ENCODE measurements at regions of chr1 and their contacts with region 1.

Region 1: GRCh38 chr1:205919026-205919746 is 24.1 kb downstream of the SLC26A9 start:
- DNase-seq: peak in 3 of 4 donors; percentile 55 to 82 (median 74)
- ATAC-seq: peak; percentile 81
- H3K4me3 ChIP-seq: no peak overlapping the region
- H3K27ac ChIP-seq: peak overlapping the region in 1 of 2 donors; percentile 59
- H3K4me1 ChIP-seq: peaks cover 11 to 12% of the 10 kb centered on the region in 2 donors
- H3K27me3 ChIP-seq: no peaks in the 10 kb centered on the region
- CTCF ChIP-seq: peak; percentile 87 to 96

Region 2: DNA sequence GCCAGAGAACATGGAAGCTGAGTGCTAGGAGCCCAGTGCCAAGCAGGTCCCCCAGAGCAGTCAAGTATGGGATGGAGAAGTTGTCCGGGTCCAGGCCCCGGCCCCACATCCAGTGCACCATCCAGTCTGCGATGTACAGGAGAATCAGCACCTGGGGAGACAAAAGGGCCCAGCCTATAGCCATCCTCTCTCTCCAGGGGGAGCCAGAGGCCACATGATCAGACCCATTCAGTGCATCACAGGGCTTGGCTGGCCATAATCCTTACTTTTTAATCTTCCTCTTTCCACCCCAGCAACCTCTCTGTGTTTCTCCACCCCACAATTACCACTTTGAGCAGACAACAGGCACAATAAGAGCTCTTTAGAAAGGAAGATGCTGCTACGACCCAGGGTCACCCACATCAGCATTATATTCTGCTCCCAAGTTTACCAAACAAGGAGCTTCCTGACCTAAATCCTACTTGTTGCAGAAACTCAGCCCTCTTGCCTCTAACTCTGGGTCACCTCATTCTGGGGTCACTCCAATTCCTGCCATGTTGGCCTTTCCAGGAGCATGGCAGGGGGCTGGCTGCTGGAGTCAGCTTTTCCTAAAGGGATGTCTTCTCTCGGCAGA is 127.5 kb before region 1 on chr1:
- intact Hi-C with region 1: loop called in 1 of 2 experiments (anchors 10 kb)
- DNase-seq: peak in 1 of 4 donors; percentile 60
- ATAC-seq: peak; percentile 94
- H3K4me3 ChIP-seq: no peak overlapping the region
- H3K27ac ChIP-seq: no peak overlapping the region
- H3K4me1 ChIP-seq: no peaks in the 10 kb centered on the region
- H3K27me3 ChIP-seq: no peaks in the 10 kb centered on the region
- CTCF ChIP-seq: peak; percentile 66 to 67

Region 3: DNA sequence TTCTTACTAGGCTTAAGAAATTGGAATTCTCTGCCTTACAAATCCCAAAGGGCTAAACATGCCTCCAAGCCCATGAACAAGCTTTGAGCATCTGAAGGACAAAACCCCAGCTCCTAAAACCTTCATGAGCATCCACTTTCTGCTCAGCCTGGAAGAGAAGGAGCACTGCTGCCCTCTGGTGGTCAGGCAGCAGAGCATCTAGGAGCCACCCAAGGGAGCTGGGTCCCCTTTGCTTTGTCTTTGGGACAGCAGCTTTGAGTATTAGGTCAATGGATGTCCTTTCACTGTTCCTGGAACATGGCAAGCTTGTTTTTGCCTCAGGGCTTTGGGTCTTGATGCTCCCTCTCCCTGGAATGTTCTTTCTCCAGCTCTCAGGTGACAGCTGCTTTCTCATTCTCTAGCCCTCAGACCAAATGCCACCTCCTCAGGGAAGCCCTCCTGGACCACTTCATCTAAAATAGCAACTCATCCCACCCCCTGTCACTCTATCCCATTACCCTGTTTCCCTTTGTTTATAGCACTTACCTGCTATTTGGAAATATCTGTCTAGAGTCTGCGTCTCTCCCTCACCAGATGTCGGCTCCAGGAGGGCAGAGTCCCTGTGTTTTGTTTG is 58.3 kb after region 1 on chr1:
- intact Hi-C with region 1: loop called in 1 of 2 experiments (anchors 2 kb)
- DNase-seq: peak; percentile 69 to 85 (median 82)
- ATAC-seq: peak; percentile 92
- H3K4me3 ChIP-seq: no peak overlapping the region
- H3K27ac ChIP-seq: no peak overlapping the region
- H3K4me1 ChIP-seq: peaks cover 0 to 4% of the 10 kb centered on the region in 2 donors
- H3K27me3 ChIP-seq: no peaks in the 10 kb centered on the region
- CTCF ChIP-seq: peak; percentile 97 to 98

Region 4: GRCh38 chr1:206117151-206117948 is 198.2 kb after region 1 on chr1 and contains the start of gene AVPR1B:
- intact Hi-C with region 1: loop called in 1 of 2 experiments (anchors 10 kb)
- DNase-seq: peak in 3 of 4 donors; percentile 38 to 80 (median 53)
- ATAC-seq: peak; percentile 83
- H3K4me3 ChIP-seq: peak within 1 kb of the TSS; percentile 15 to 28
- H3K27ac ChIP-seq: no peak within 1 kb of the TSS
- H3K4me1 ChIP-seq: peaks cover 10 to 14% of the 10 kb centered on the region in 2 donors
- H3K27me3 ChIP-seq: peaks cover 0 to 37% of the 10 kb centered on the region in 2 donors
- CTCF ChIP-seq: no peak
- polyA plus RNA-seq, gene AVPR1B: 0.08 to 0.11 (median 0.10) TPM in 3 of 6 donors, not detected in the others